Naive thymus-derived CD4-positive, alpha-beta T cell (primary cell): ENCODE measurements at regions of chr2 and their contacts with region 1.

Region 1: DNA sequence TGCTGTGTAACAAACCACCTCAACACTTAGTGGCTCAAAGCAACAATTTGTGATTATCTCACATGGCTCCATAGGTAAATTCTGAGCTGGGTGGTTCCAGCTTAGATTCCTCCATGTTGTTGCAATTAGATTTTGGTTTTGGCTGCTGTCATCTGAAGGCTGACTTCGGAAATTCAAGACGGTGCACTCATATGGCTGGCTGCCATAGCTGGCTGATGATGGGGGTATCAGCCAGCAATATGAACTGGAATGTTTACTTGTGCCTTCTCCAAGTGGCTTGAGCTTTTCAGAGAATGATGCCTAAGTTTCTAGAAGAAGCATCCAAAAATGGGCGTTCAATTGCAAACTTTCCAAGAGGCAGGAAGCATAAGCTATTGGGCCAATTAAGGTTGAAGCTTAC is 213.1 kb downstream of the GCA start:
- DNase-seq: no peak
- ATAC-seq: no peak
- H3K4me3 ChIP-seq: no peak overlapping the region
- H3K4me3 Mint-ChIP-seq: no peak overlapping the region
- H3K27ac ChIP-seq: no peak overlapping the region
- H3K27ac Mint-ChIP-seq: no peak overlapping the region
- H3K4me1 ChIP-seq: no peaks in the 10 kb centered on the region
- H3K4me1 Mint-ChIP-seq: no peaks in the 10 kb centered on the region
- H3K27me3 ChIP-seq: no peaks in the 10 kb centered on the region
- H3K27me3 Mint-ChIP-seq: peaks cover 0 to 3% (median 0%) of the 10 kb centered on the region in 5 donors

Region 2: DNA sequence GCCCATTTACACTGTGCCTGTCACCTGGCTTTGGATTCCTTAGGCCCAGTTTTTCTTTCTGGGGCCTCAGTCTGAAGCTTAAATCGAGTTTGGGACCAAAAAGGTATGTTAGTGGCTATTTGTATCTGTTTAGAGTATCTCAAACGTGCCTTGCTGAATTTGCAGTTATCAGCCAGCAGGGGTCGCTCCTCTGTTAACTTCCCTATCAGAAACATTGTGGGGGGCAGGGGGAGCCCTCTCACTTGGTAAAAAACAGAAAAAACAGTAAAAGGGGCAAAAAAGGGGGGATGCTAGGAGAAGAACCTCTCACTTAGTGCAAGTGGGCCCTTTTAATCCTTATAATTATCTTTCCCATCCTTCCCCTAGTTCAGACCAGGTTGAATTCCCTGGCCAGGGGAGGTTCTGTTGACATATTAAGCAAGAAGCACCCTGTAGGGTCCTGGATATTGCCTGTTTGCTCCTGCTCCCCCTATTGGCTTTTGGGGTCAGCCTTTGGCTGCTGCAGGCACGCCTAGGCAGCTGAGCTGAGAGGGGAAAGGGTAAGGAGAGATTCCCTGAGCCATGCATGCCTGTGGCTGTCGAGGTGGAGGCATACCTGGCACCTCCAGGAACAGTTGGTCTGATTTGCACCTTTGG is 229.7 kb before region 1 on chr2:
- CTCF ChIA-PET with region 1: no interaction called
- POLR2A ChIA-PET with region 1: no interaction called
- intact Hi-C with region 1: no loop called
- DNase-seq: peak in 4 of 9 donors; percentile 17 to 30 (median 24)
- ATAC-seq: no peak
- H3K4me3 ChIP-seq: no peak overlapping the region
- H3K4me3 Mint-ChIP-seq: no peak overlapping the region
- H3K27ac ChIP-seq: no peak overlapping the region
- H3K27ac Mint-ChIP-seq: peak overlapping the region in 1 of 9 donors; percentile 26
- H3K4me1 ChIP-seq: no peaks in the 10 kb centered on the region
- H3K4me1 Mint-ChIP-seq: peaks cover 0 to 16% (median 0%) of the 10 kb centered on the region in 7 donors
- H3K27me3 ChIP-seq: no peaks in the 10 kb centered on the region
- H3K27me3 Mint-ChIP-seq: no peaks in the 10 kb centered on the region

Region 3: DNA sequence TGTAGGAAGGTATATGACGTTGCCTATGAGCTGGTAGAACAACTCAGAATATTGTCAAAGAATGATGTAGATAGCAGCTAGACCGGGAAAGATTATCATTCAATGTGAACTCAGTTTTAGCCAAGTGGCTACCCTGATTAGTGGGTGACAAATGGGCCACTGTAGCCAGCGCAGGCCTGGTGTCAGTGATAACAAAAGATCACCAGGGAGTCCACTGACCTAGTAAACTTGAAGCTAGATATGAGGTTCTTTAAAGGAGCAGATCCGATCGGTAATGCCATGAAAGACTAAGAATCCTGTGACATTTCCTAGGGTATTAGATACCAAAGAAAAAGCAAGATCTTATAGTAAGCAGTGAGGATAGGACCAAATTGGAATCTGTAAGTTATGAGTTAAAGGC is 32.1 kb before region 1 on chr2:
- CTCF ChIA-PET with region 1: no interaction called
- POLR2A ChIA-PET with region 1: no interaction called
- intact Hi-C with region 1: loop called in 1 of 2 experiments (anchors 1 kb)
- DNase-seq: no peak
- ATAC-seq: no peak
- H3K4me3 ChIP-seq: no peak overlapping the region
- H3K4me3 Mint-ChIP-seq: no peak overlapping the region
- H3K27ac ChIP-seq: no peak overlapping the region
- H3K27ac Mint-ChIP-seq: no peak overlapping the region
- H3K4me1 ChIP-seq: no peaks in the 10 kb centered on the region
- H3K4me1 Mint-ChIP-seq: no peaks in the 10 kb centered on the region
- H3K27me3 ChIP-seq: no peaks in the 10 kb centered on the region
- H3K27me3 Mint-ChIP-seq: peaks cover 0 to 10% (median 0%) of the 10 kb centered on the region in 5 donors

Region 4: DNA sequence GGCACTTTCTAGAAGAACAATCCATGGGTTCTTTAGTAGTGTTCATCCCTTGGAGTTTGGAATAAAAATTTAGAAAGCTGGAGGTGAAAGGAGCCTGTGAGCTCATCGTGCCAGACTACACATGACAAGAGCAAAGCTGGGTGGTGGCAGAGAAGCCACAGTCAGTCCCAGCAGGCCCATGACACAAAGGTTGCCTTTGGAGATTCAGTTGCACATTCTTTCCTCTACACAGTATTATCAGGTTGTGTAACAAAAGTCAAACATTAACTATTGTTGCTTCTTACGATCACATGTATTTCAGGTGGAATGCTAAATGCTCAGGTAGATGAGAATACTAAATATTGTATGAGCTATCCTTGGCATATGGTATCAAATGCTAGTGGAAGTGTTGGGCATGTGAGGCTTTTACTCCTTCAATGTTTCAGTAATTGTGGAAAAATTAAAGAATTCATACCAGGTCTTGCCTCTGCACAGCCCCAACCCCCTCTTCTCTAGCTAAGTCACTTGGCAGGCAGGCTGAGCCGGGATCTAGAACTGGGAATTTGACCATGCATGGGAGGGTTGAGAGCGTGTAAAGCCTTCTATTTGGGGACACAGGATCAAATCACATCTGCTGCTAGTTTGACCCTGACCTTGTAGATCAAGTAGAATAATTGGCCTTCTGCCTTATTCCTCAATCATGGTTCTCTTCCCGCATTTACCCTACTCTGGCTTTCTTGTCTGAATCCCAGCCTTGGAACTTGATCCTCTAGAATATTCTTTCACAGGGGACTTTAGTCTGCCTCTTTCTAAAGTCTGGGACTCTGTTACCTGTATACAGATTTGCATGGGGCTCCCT is 17.8 kb after region 1 on chr2:
- CTCF ChIA-PET with region 1: no interaction called
- POLR2A ChIA-PET with region 1: no interaction called
- intact Hi-C with region 1: no loop called
- DNase-seq: no peak
- ATAC-seq: no peak
- H3K4me3 ChIP-seq: no peak overlapping the region
- H3K4me3 Mint-ChIP-seq: no peak overlapping the region
- H3K27ac ChIP-seq: no peak overlapping the region
- H3K27ac Mint-ChIP-seq: no peak overlapping the region
- H3K4me1 ChIP-seq: no peaks in the 10 kb centered on the region
- H3K4me1 Mint-ChIP-seq: no peaks in the 10 kb centered on the region
- H3K27me3 ChIP-seq: no peaks in the 10 kb centered on the region
- H3K27me3 Mint-ChIP-seq: no peaks in the 10 kb centered on the region

Region 5: DNA sequence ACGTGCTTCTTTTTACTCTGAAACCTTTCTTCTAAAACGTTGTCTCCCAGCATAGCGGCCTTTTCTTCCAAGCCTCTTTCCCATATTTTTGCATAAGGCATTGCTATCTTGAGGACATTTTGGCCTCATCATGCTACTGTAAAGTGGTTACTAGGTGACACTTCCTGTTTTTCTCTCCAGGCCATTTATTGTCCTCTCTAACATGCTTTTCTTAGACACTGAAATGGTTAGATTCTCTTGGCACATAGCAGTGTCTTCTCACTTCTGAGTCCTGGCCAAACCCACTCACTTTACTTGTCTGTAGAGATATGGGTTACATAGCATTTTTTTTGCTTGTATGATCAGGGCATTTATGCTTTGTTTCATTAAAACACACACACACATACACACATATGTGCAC is 331.7 kb after region 1 on chr2:
- CTCF ChIA-PET with region 1: no interaction called
- POLR2A ChIA-PET with region 1: no interaction called
- intact Hi-C with region 1: no loop called
- DNase-seq: no peak
- ATAC-seq: no peak
- H3K4me3 ChIP-seq: no peak overlapping the region
- H3K4me3 Mint-ChIP-seq: no peak overlapping the region
- H3K27ac ChIP-seq: no peak overlapping the region
- H3K27ac Mint-ChIP-seq: no peak overlapping the region
- H3K4me1 ChIP-seq: no peaks in the 10 kb centered on the region
- H3K4me1 Mint-ChIP-seq: peaks cover 0 to 2% (median 0%) of the 10 kb centered on the region in 7 donors
- H3K27me3 ChIP-seq: no peaks in the 10 kb centered on the region
- H3K27me3 Mint-ChIP-seq: no peaks in the 10 kb centered on the region